Ascending aorta (tissue), 2 donors: ENCODE measurements at regions of chrX and their contacts with region 1.

Region 1: DNA sequence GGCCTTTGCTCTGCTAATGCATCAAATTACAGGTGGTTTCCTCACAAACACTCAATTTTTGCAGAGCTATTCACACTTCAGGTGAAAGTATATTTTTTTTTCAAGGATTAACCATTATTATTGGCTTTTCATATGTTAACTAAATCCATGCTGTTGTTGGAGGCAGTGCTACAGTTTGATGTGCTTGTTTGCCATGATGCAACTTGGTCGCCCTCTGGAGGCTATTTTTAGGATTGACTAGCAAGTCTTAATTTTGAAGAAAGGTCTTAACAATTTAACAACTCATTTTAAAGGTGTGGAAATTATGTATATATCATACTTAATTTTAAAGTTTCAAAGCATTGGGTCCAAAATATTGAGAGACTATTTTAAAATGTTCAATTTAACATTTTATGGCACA is 168.8 kb upstream of the FAM47A start:
- DNase-seq: no peak
- H3K4me3 ChIP-seq: no peak overlapping the region
- H3K27ac ChIP-seq: no peak overlapping the region
- H3K4me1 ChIP-seq: no peaks in the 10 kb centered on the region
- H3K27me3 ChIP-seq: no peaks in the 10 kb centered on the region
- CTCF ChIP-seq: peak; percentile 11 to 54 (median 47)

Region 2: GRCh38 chrX:33434256-33435092 is 866.4 kb before region 1 on chrX:
- intact Hi-C with region 1: loop called (anchors 2 kb)
- DNase-seq: peak in 1 of 2 donors; percentile 70
- H3K4me3 ChIP-seq: peak overlapping the region in 1 of 2 donors; percentile 24
- H3K27ac ChIP-seq: no peak overlapping the region
- H3K4me1 ChIP-seq: no peaks in the 10 kb centered on the region
- H3K27me3 ChIP-seq: no peaks in the 10 kb centered on the region
- CTCF ChIP-seq: peak; percentile 47 to 92 (median 90)

Region 3: DNA sequence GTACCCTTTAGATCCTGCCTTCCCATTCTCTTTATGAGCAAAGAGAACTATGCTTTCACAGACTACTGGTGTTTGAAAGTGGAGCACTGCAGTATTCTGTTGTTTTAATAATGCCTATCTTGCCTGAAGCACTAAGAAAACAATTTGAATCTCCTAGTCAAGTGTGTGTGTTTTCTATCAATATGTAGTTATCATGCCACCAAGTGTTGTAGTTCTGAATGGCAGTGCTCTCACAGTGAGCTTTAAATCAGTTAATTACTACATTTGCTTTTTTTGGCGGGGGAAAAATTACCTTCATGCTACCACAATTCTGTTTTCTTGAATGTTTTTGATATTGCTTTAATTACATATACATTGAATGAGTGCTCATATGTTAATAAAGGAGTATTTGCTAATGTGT is 25.2 kb before region 1 on chrX:
- intact Hi-C with region 1: no loop called
- DNase-seq: no peak
- H3K4me3 ChIP-seq: no peak overlapping the region
- H3K27ac ChIP-seq: no peak overlapping the region
- H3K4me1 ChIP-seq: no peaks in the 10 kb centered on the region
- H3K27me3 ChIP-seq: no peaks in the 10 kb centered on the region
- CTCF ChIP-seq: no peak